BJ (cell line): ENCODE measurements at regions of chr3 and their contacts with region 1.

Region 1: GRCh38 chr3:196412704-196413103 is 19.5 kb downstream of the UBXN7 start:
- DNase-seq: no peak
- H3K4me3 ChIP-seq: no peak overlapping the region
- H3K27me3 ChIP-seq: no peaks in the 10 kb centered on the region
- CTCF ChIP-seq: no peak

Region 2: DNA sequence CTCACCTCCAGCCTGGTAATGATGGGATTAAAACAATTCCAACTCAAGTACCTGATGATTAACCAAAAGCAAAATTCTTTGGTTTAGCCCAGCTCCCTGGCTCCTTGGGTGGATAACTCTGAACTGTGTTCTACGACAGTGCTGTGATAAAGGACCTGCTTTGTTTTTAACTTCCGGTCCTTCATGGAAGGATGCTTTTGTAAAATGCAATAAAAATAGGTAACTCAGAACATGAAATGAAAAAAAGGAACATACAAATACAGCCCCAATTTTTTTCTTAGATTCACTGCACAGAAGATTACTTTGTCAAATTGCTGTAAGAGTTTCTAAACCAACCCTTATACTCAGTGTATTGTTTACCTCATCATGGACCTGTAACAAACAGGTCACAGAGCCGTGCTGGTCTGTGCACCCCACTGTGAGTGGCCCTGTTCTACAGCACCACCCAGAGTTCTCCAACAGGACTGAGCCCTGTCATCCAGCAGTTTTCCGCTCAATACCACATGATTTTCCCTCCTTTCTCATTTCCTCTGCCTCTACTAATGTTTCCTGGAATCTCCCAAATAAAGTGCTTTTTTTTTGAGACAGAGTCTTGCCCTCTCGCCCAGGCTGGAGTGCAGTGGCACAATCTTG is 120.3 kb before region 1 on chr3:
- CTCF ChIA-PET with region 1: no interaction called
- POLR2A ChIA-PET with region 1: no interaction called
- DNase-seq: no peak
- H3K4me3 ChIP-seq: no peak overlapping the region
- H3K27me3 ChIP-seq: no peaks in the 10 kb centered on the region
- CTCF ChIP-seq: no peak

Region 3: DNA sequence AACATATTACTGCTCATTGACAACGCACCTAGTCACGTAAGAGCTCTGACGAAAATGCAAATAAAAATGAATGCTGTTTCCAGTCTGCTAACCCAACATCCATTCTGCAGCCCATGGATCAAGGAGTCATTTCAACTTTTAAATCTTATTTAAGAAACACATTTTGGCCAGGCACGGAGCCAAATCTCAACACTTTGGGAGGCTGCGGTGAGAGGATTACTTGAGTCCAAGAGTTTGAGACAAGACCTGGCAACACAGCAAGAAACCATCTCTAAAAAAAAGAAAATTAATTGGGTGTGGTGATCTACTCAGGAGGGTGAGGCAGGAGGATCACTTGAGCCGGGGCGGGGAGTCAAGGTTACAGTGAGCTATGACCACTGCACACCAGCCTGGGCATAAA is 52.1 kb before region 1 on chr3:
- CTCF ChIA-PET with region 1: no interaction called
- POLR2A ChIA-PET with region 1: interaction called, 27 read pairs
- DNase-seq: no peak
- H3K4me3 ChIP-seq: no peak overlapping the region
- H3K27me3 ChIP-seq: no peaks in the 10 kb centered on the region
- CTCF ChIP-seq: no peak

Region 4: DNA sequence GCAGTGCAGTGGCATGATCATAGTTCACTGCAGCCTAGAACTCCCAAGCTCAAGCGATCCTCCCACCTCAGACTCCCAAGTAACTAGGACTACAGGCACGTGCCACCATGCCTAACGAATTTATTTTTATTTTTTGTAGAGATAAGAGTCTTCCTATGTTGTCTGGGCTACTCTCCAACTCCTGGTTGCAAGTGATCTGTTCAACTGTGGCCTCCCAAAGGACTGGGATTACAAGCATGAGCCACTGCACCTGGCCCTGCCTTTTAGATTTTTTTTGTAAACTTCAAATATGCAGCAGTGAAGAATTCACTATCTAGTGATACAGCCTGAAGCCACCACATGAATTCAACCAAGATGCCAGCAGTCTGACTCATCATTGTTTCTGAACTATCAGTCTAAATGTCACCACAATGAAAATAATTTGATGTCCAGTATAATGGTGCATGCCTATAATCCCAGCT is 13.2 kb before region 1 on chr3:
- CTCF ChIA-PET with region 1: no interaction called
- POLR2A ChIA-PET with region 1: no interaction called
- DNase-seq: peak; percentile 9
- H3K4me3 ChIP-seq: no peak overlapping the region
- H3K27me3 ChIP-seq: no peaks in the 10 kb centered on the region
- CTCF ChIP-seq: no peak

Region 5: DNA sequence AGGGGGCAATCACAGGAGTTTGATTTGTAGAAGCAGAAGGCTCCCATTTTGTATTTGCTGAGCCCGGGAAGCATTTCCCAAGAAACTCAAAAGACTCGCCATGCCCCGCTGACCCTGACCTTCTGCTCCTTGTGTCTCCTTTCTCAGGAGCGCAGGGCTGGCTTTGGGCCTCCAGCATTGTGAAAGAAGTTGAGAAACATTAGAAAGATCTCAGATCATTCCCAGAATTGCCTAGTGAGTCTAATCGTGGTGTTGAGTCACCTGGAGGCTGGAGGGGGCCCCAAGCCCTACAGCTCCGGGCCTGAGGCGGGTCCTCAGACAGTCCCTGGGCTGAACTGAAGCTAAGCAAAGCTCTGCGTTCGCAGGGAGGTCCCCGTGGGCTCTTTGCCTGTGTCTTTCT is 566.8 kb after region 1 on chr3:
- CTCF ChIA-PET with region 1: no interaction called
- POLR2A ChIA-PET with region 1: no interaction called
- DNase-seq: no peak
- H3K4me3 ChIP-seq: no peak overlapping the region
- H3K27me3 ChIP-seq: no peaks in the 10 kb centered on the region
- CTCF ChIP-seq: no peak